AG04449 (cell line): ENCODE measurements at regions of chr2 and their contacts with region 1.

Region 1: DNA sequence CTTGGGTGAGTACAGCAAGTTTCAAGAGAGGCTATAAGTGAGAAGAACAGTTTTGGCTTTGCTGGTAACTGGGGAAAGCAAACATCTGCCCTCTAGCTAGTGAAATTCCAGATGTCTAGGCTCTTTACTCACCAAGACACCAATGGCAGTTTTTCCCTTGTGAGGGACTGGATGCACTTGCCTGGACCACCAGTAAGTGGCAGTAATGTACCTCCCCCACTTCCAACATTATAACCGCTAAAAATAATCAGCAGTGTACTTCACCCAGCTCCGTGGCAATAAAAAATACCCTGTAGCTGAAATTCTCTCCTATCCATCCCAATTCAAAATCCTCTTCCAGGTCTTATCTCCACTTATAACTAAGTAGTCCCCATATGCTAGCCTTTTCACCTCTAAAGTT is 383.9 kb downstream of the ARHGAP15 start:
- DNase-seq: no peak
- H3K4me3 ChIP-seq: no peak overlapping the region
- CTCF ChIP-seq: peak; percentile 81

Region 2: DNA sequence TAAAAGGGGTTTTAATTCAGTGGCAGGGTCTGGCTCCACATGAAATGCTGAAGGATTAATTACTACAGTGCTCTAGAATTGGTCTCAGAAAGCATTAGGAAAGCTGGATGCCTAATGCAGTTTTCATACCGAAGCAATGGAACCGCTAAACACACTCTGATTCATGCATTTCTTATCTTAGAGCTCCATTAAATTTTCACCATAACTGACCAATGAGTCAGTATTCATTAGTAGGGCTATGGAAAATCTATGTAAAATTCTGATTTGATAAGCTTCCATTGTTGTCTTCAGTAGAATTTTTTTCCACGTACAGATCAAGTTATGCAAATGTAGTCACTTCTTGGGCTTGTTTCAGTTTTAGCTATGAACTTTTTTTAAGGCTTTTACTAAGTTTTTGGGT is 23.9 kb before region 1 on chr2:
- CTCF ChIA-PET with region 1: interaction called, 19 read pairs
- POLR2A ChIA-PET with region 1: no interaction called
- DNase-seq: peak; percentile 74
- H3K4me3 ChIP-seq: no peak overlapping the region
- CTCF ChIP-seq: no peak

Region 3: DNA sequence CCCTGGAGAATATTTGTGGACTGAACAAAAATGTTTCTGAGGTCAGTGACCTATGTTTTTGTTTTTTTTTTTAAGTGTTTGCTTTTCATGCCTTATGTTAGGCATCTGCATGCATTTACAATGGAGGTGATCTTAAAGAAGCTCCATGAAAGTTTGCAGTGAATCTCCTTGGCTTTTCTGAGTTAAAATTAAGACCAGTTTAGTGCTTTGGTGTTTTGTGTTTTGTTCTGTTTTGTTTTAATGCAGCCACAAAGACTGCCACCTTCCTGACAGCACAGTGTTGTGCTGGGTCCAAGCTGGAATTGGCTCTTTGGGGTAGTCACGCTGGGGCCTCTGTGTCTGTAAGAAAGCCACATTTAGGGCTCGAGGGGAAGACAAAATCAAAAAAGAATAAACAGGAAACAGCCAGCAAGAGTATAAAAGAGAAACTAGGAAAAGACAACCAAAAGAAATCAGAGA is 12.3 kb after region 1 on chr2:
- CTCF ChIA-PET with region 1: interaction called, 11 read pairs
- POLR2A ChIA-PET with region 1: no interaction called
- DNase-seq: no peak
- H3K4me3 ChIP-seq: no peak overlapping the region
- CTCF ChIP-seq: no peak

Region 4: GRCh38 chr2:143594161-143594560 is 81.1 kb after region 1 on chr2:
- CTCF ChIA-PET with region 1: no interaction called
- POLR2A ChIA-PET with region 1: no interaction called
- DNase-seq: no peak
- H3K4me3 ChIP-seq: no peak overlapping the region
- CTCF ChIP-seq: no peak